PC-3 (cell line): ENCODE measurements at regions of chr3 and their contacts with region 1.

Region 1: DNA sequence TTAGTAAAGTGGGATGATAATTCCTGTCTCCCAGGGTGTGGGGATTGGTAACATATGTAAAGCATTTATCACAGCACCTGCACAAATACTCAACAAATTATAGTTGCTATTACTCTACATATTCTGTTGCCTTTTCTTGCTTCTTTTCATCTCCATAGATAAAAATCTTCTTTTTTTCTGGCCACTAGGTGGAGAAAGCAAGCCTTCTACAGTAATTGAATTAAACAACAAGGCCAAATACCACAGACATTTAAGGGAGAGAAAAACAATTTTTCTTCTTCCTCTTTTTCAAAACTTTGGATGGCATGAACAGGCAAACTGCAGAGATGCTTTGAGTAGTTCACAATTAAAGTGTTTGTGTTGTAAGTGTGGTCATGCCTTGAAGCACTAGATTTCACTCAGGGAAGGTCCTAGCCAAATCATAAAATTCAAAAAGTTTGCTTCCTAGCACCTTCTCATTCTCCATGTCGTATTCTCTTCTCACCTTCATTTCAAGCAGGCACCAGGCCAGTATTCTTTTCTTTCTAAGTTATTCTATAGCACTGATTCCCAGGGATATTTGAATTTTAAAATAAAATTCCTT is 493.4 kb upstream of the TGFBR2 start:
- DNase-seq: peak; percentile 85
- ATAC-seq: peak; percentile 53
- H3K4me3 ChIP-seq: no peak overlapping the region
- H3K27ac ChIP-seq: no peak overlapping the region
- H3K4me1 ChIP-seq: peaks cover 23% of the 10 kb centered on the region
- H3K27me3 ChIP-seq: no peaks in the 10 kb centered on the region
- CTCF ChIP-seq: peak; percentile 88

Region 2: GRCh38 chr3:29871087-29871486 is 241.9 kb before region 1 on chr3:
- CTCF ChIA-PET with region 1: no interaction called
- POLR2A ChIA-PET with region 1: no interaction called
- intact Hi-C with region 1: loop called (anchors 1 kb)
- DNase-seq: peak; percentile 46
- ATAC-seq: peak; percentile 78
- H3K4me3 ChIP-seq: no peak overlapping the region
- H3K27ac ChIP-seq: no peak overlapping the region
- H3K4me1 ChIP-seq: no peaks in the 10 kb centered on the region
- H3K27me3 ChIP-seq: no peaks in the 10 kb centered on the region
- CTCF ChIP-seq: peak; percentile 61

Region 3: GRCh38 chr3:30042274-30042859 is 70.6 kb before region 1 on chr3:
- CTCF ChIA-PET with region 1: interaction called, 3 read pairs
- POLR2A ChIA-PET with region 1: no interaction called
- intact Hi-C with region 1: loop called (anchors 2 kb)
- DNase-seq: peak; percentile 84
- ATAC-seq: peak; percentile 87
- H3K4me3 ChIP-seq: no peak overlapping the region
- H3K27ac ChIP-seq: no peak overlapping the region
- H3K4me1 ChIP-seq: no peaks in the 10 kb centered on the region
- H3K27me3 ChIP-seq: no peaks in the 10 kb centered on the region
- CTCF ChIP-seq: peak; percentile 93

Region 4: GRCh38 chr3:30193625-30194044 is 80.6 kb after region 1 on chr3:
- CTCF ChIA-PET with region 1: no interaction called
- POLR2A ChIA-PET with region 1: no interaction called
- intact Hi-C with region 1: no loop called
- DNase-seq: no peak
- ATAC-seq: peak; percentile 43; the same call in 1 of the 2 replicates
- H3K4me3 ChIP-seq: no peak overlapping the region
- H3K27ac ChIP-seq: no peak overlapping the region
- H3K4me1 ChIP-seq: peaks cover 12% of the 10 kb centered on the region
- H3K27me3 ChIP-seq: no peaks in the 10 kb centered on the region
- CTCF ChIP-seq: no peak

Region 5: GRCh38 chr3:30258426-30259392 is 145.7 kb after region 1 on chr3:
- CTCF ChIA-PET with region 1: no interaction called
- POLR2A ChIA-PET with region 1: no interaction called
- intact Hi-C with region 1: no loop called
- DNase-seq: peak; percentile 76
- ATAC-seq: peak; percentile 92
- H3K4me3 ChIP-seq: no peak overlapping the region
- H3K27ac ChIP-seq: peak overlapping the region; percentile 29
- H3K4me1 ChIP-seq: peaks cover 16% of the 10 kb centered on the region; the same call in 1 of the 2 replicates
- H3K27me3 ChIP-seq: no peaks in the 10 kb centered on the region
- CTCF ChIP-seq: no peak

Region 6: GRCh38 chr3:30342319-30343060 is 229.5 kb after region 1 on chr3:
- CTCF ChIA-PET with region 1: no interaction called
- POLR2A ChIA-PET with region 1: interaction called, 6 read pairs
- intact Hi-C with region 1: loop called (anchors 5 kb)
- DNase-seq: peak; percentile 99
- ATAC-seq: peak; percentile 64
- H3K4me3 ChIP-seq: peak overlapping the region; percentile 28; the same call in 1 of the 2 replicates
- H3K27ac ChIP-seq: peak overlapping the region; percentile 98
- H3K4me1 ChIP-seq: peaks cover 59% of the 10 kb centered on the region
- H3K27me3 ChIP-seq: no peaks in the 10 kb centered on the region
- CTCF ChIP-seq: no peak

Region 7: DNA sequence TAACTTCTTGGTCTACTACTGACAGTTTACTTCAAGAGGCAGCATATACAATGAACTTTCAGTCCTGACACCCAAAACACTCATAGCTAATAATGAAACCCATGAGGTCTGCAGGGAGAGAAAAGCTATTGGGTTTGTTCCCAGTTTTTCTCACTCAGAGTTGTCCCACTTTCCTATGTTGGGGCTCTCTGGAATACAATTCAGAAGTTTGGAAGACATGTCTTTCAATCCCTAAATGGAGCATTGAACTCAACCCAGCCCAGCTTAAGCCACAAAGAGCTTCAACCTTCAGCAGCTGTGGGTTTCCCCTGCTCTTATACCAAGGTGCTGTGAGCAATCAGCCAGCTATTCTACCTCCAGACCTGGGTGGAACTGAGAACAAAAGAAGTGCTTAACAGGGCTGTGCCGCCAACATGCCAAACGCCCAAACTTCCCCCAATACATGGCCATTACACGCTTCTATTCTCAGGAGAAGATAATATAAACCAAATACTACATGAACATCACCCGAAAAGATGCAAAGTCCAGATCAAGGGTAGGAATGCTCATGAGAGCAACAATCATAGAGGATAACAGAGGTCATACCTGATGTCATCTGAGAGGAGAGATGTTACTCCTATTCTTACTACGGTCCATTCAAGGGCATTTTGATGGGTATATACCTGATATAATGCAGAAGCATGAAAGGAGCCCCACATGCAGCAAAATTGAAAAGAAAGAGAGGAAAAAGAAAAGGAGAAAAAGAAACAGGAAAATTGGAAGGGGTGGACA is 362.2 kb after region 1 on chr3:
- CTCF ChIA-PET with region 1: no interaction called
- POLR2A ChIA-PET with region 1: no interaction called
- intact Hi-C with region 1: loop called (anchors 10 kb)
- DNase-seq: no peak
- ATAC-seq: no peak
- H3K4me3 ChIP-seq: no peak overlapping the region
- H3K27ac ChIP-seq: no peak overlapping the region
- H3K4me1 ChIP-seq: peaks cover 35% of the 10 kb centered on the region
- H3K27me3 ChIP-seq: no peaks in the 10 kb centered on the region
- CTCF ChIP-seq: no peak

Region 8: DNA sequence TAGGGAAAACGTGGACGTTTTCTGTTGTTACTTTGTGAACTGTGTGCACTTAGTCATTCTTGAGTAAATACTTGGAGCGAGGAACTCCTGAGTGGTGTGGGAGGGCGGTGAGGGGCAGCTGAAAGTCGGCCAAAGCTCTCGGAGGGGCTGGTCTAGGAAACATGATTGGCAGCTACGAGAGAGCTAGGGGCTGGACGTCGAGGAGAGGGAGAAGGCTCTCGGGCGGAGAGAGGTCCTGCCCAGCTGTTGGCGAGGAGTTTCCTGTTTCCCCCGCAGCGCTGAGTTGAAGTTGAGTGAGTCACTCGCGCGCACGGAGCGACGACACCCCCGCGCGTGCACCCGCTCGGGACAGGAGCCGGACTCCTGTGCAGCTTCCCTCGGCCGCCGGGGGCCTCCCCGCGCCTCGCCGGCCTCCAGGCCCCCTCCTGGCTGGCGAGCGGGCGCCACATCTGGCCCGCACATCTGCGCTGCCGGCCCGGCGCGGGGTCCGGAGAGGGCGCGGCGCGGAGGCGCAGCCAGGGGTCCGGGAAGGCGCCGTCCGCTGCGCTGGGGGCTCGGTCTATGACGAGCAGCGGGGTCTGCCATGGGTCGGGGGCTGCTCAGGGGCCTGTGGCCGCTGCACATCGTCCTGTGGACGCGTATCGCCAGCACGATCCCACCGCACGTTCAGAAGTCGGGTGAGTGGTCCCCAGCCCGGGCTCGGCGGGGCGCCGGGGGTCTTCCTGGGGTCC is 493.5 kb after region 1 on chr3 and contains the start of gene TGFBR2:
- CTCF ChIA-PET with region 1: no interaction called
- POLR2A ChIA-PET with region 1: no interaction called
- intact Hi-C with region 1: loop called (anchors 5 kb)
- DNase-seq: peak; percentile 98
- ATAC-seq: peak; percentile 90
- H3K4me3 ChIP-seq: peak within 1 kb of the TSS; percentile 94
- H3K27ac ChIP-seq: peak within 1 kb of the TSS; percentile 88
- H3K4me1 ChIP-seq: peaks cover 49% of the 10 kb centered on the region
- H3K27me3 ChIP-seq: no peaks in the 10 kb centered on the region
- CTCF ChIP-seq: no peak; the same call in 1 of the 2 replicates
- total RNA-seq, gene TGFBR2: 48.2 and 55.9 TPM in 2 replicates